GM13976 (cell line): ENCODE measurements at regions of chr6 and their contacts with region 1.

Region 1: DNA sequence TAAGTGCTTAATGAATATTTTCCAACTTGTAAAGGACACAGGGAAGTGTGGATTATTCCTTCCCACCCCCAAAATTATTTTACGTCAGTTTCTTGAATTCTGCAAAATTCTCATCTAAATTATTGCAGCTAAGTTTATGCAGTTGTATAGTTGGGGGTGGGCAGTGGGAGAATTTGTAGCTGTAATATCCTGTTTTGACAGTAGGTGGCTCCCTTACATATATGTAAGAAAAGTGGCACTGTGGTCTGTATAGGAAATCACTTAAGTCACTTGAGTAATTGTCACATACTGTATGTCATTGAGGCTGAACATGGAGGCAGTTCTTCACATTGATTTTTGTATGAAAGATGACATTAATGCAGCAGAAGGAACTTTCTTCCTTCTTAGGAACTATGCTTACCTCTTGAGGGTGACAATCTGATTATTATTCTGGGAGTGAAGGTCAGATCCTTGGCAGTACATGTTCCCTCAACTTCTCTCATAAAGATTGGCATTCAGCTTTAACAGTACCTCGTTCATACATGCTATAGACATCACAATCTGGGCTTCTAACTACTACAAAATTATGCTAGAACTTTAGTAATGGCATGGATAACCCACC is 14.7 kb upstream of the CFAP206 start:
- DNase-seq: peak; percentile 41
- CTCF ChIP-seq: peak; percentile 69

Region 2: GRCh38 chr6:87066449-87067333 is 326.4 kb before region 1 on chr6:
- in situ Hi-C with region 1: loop called (anchors 25 kb)
- DNase-seq: peak; percentile 62
- CTCF ChIP-seq: peak; percentile 54

Region 3: DNA sequence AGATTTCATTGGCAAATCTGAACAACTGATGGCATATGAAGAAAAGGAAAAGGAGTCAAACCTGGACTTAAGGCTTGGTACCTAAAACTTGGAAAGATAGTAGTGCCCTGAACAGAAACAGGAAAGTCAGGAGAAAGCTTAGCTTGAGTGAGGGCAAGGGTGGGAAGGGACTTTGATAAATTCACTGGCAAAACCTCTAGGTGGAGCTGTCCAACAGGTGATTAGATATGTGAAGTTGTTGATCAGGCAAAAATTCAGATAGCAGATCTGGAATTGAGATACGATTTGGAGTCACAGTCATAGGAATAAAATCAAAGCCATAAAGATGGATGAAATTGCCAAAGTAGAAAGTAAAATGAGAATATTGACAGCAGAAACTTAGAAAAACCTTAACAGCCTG is 253.9 kb before region 1 on chr6:
- in situ Hi-C with region 1: loop called (anchors 10 kb)
- DNase-seq: peak; percentile 59
- CTCF ChIP-seq: peak; percentile 64

Region 4: DNA sequence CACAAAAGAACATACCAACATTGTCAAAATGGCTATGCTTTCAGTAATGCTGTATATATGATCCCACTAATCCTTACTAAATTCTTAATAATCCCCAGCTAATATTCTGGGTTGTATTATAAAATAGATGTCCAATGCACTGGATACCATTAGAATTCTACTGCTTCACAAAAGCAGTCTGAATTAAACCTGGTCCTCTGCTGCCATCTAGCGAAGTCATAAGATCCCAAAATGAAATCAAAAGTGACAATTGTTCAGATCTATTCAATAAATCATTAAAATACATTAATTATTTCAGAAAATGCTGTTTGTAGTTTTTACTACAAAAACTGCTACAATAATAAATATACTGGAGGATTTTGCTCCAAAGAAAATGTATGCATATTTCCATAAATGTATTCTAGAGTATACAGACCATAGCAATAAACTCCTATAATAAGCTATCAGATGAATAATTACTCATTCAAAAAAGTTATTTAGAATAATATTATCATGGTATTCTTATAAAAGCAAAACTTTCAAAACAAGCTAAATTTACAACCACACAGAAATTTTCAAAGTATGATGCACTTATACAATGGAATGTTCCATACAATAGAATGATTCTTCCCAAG is 1477.7 kb after region 1 on chr6:
- in situ Hi-C with region 1: loop called (anchors 25 kb)
- DNase-seq: peak; percentile 16
- CTCF ChIP-seq: peak; percentile 51